BJ (cell line): ENCODE measurements at regions of chr20 and their contacts with region 1.

Region 1: GRCh38 chr20:3820048-3820900 is at the start of gene AP5S1:
- DNase-seq: peak; percentile 64
- H3K4me3 ChIP-seq: peak within 1 kb of the TSS; percentile 54
- H3K27me3 ChIP-seq: no peaks in the 10 kb centered on the region
- CTCF ChIP-seq: peak; percentile 66
- polyA plus RNA-seq, gene AP5S1: 7.5 and 12.2 TPM in 2 replicates

Region 2: DNA sequence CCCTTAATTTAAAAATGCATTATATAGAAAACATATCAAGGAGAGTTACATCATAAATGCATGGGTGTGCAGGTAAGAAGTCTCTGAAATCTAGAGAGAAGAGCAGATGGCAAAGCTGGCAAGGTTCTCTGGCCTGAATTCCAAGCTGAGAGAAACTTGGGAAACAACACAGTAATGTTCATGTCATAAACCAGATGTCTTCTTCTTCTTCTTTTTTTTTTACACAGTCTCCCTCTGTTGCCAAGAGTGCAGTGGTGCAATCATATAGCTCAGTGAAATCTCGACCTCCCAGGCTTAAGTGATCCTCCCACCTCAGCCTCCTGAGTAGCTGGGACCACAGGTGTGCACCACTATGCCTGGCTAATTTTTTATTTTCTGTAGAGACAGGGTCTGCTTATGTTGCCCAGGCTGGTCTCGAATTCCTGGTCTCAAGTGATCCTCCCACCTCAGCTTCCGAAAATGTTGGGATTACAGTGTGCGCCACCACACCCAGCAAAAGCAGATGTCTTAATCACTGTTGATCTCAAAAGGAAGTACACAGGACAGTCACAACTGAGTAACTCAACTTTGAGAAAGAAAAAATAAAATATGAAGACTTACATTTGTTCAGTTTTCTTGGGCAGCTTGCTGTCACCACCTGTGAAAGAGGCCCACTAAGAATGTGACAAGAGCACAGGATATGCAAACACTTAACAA is 490.1 kb before region 1 on chr20:
- CTCF ChIA-PET with region 1: no interaction called
- POLR2A ChIA-PET with region 1: no interaction called
- DNase-seq: peak; percentile 36
- H3K4me3 ChIP-seq: no peak overlapping the region
- H3K27me3 ChIP-seq: no peaks in the 10 kb centered on the region
- CTCF ChIP-seq: peak; percentile 31; the same call in 1 of the 2 replicates

Region 3: GRCh38 chr20:3753098-3753980 is 66.9 kb before region 1 on chr20:
- CTCF ChIA-PET with region 1: interaction called, 22 read pairs
- POLR2A ChIA-PET with region 1: no interaction called
- DNase-seq: no peak
- H3K4me3 ChIP-seq: no peak overlapping the region
- H3K27me3 ChIP-seq: no peaks in the 10 kb centered on the region
- CTCF ChIP-seq: peak; percentile 87

Region 4: DNA sequence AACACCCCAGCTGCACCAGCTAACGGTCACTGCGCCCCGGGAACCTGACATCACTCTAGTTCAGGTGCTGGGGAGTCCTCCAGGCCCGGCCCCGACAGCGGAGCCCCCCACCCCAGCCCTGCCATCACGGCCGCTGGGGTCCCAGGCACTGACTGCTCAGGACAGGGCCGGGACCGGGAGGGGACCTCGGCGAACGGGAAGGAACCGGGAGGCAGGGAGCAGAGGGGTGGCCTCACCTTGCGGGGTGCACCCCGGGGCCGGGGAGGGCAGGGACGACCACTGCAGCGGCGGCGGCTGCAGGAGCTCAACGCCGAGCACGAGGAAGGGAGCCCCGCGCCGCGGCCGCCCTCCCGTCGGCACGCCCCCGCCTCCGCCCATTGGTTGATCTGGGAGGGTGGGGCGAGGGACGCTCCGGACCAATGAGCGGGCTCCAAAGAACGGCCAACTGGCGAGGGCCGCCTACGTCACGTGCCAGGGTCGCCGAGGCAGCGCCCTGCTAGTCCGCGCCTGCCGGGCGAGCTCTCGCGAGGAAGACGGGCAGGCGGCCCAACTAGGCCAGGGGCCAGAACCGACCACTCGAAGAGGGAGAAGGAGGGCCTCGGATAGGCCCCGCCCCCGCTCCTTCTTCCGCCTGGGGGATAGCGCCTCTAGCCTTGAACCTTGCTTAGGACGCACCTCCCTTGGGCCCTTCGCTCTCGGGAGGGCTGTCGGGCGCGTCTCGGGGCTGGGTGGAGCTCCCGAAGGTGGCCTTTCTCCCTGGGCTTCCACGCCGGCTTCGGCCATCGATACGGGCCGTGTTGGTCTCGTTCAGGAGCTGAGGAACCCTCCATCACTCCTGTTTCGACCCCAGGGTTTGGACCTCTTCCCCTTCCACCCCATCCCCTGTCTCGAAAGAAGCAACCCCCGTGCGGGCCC is 52.6 kb before region 1 on chr20 and contains the start of gene ADISSP:
- CTCF ChIA-PET with region 1: interaction called, 10 read pairs
- POLR2A ChIA-PET with region 1: no interaction called
- DNase-seq: peak; percentile 85
- H3K4me3 ChIP-seq: peak within 1 kb of the TSS; percentile 73
- H3K27me3 ChIP-seq: no peaks in the 10 kb centered on the region
- CTCF ChIP-seq: peak; percentile 30
- polyA plus RNA-seq, gene ADISSP: 21.3 and 34.3 TPM in 2 replicates

Region 5: DNA sequence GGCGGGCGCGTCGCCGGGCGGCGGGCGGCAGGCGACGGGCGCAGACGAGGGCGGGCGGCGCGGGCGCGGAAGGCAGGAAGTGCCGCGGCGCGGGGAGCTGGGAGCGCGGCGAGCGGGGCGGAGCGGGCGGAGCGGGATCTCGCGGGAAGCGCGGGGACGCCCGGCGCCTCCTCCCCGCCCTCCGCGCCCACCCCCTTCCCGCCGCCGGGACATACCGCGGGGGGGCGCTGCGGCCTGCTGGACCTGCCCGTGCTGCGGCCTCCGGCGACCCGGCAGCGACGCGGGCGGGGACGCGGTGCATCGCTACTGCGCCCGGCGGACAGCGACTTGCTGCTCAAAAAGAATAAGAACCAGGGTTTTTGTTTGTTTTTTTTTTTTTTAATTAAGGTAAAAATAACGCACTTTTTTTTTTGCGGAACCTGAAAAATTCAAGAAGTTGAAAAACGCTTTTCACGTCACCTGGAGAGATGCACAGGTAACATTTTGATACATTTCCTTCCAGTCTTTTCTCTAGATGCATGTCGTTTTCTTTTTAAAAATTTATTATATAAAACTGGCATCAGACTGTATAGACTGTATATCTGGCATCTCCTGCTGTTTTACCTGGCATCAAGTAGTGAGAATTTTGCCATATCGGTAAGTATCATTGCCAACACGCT is 33.5 kb before region 1 on chr20 and contains the start of gene CENPB:
- CTCF ChIA-PET with region 1: interaction called, 248 read pairs
- POLR2A ChIA-PET with region 1: interaction called, 5 read pairs
- DNase-seq: no peak
- H3K4me3 ChIP-seq: peak within 1 kb of the TSS; percentile 71
- H3K27me3 ChIP-seq: no peaks in the 10 kb centered on the region
- CTCF ChIP-seq: peak; percentile 45
- polyA plus RNA-seq, gene CENPB: 31.0 and 47.5 TPM in 2 replicates

Region 6: GRCh38 chr20:3795511-3796468 is 24.5 kb before region 1 on chr20 and contains the start of gene CDC25B:
- CTCF ChIA-PET with region 1: interaction called, 248 read pairs
- POLR2A ChIA-PET with region 1: no interaction called
- DNase-seq: peak; percentile 51
- H3K4me3 ChIP-seq: peak within 1 kb of the TSS; percentile 68
- H3K27me3 ChIP-seq: no peaks in the 10 kb centered on the region
- CTCF ChIP-seq: peak; percentile 47
- polyA plus RNA-seq, gene CDC25B: 41.8 and 68.1 TPM in 2 replicates

Region 7: DNA sequence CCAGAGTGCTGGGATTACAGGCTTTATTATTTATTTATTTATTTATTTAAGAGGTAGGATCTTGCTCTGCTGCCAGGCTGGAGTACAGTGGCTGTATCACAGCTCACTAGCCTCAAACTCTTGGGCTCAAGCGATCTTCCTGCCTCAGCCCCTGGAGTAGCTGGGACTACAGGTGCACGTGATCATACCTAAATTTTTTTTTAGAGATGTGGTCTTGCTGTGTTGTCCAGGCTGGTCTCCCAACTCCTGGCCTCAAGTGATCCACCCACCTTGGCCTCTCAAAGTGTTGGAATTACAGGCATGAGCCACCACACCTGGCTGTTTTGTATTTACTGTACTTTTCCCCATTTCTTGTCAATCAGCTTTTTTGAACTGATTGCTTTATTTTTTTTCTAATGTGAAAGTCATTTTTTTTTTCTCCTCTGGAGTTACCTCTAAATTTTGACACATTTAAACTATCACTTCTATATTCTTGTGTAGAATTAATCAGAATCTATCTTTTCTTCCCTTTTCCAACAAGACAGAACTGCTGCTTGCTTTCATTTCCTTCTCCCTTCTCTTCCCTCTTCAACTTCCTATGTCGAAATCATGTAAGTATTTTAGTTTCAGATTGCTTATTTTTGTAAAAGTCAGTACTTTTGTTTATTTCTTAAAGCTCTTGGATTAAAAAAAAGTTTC is 80.9 kb after region 1 on chr20:
- CTCF ChIA-PET with region 1: no interaction called
- POLR2A ChIA-PET with region 1: no interaction called
- DNase-seq: no peak
- H3K4me3 ChIP-seq: no peak overlapping the region
- H3K27me3 ChIP-seq: no peaks in the 10 kb centered on the region
- CTCF ChIP-seq: no peak

Region 8: DNA sequence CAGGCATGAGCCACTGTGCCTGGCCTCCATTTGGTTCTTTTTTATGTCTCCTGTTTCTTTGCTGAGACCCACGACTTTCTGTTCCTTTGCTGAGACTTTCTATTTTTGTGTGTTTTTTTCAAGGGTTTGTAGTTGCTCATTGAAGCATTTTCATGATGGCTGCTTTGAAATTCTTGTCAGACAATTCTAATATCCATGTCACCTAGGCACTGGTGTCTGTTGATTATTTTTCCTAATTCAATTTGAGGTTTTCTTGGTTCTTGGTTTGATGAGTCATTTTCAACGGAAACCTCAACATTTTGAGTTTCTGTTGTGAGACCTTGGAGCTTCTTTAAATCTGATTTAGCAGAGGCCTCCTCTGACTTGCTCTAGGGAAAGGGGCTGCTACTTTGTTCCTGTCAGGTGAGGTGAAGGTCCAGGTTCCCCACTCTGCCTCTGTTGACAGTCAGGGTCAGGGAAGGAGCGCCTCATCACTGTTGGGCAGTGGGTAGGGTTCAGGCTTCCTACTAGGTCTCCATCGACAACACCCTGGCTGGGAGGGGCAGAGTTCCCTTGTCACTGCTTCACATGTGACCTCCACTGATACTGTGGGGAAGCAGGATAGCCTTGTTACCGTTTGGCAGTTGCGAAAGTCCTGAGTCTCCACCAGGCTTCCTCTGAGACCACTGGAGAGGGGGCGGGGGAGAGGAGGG is 262.3 kb after region 1 on chr20:
- CTCF ChIA-PET with region 1: interaction called, 10 read pairs
- POLR2A ChIA-PET with region 1: no interaction called
- DNase-seq: no peak
- H3K4me3 ChIP-seq: no peak overlapping the region
- H3K27me3 ChIP-seq: no peaks in the 10 kb centered on the region
- CTCF ChIP-seq: no peak

Region 9: GRCh38 chr20:4465855-4466545 is 645.7 kb after region 1 on chr20:
- CTCF ChIA-PET with region 1: no interaction called
- POLR2A ChIA-PET with region 1: no interaction called
- DNase-seq: no peak
- H3K4me3 ChIP-seq: no peak overlapping the region
- H3K27me3 ChIP-seq: no peaks in the 10 kb centered on the region
- CTCF ChIP-seq: no peak